PC-3 (cell line): ENCODE measurements at regions of chr14 and their contacts with region 1.

Region 1: GRCh38 chr14:34750670-34751069 is 36.3 kb upstream of the CFL2 start:
- DNase-seq: no peak
- ATAC-seq: no peak
- H3K4me3 ChIP-seq: no peak overlapping the region
- H3K27ac ChIP-seq: no peak overlapping the region
- H3K4me1 ChIP-seq: no peaks in the 10 kb centered on the region
- H3K27me3 ChIP-seq: no peaks in the 10 kb centered on the region
- CTCF ChIP-seq: no peak

Region 2: DNA sequence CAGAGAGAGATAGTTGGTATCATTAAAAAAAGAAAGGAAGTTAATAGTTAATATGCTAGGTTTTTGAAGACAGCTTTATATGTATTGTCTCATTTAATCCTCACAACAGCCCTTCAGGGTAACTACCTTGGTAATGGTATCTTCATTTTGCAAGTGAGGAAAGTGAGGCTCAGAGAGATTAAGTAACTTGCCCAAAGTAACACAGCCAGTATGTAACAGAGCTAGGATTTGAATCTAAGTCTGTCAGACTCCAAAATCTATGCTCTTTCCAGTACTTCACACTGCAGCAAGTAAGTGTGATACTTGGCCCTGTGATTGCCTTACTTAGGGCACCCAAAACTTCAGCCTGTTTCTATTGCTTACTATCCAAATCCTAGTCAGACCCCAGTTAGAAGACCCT is 239.1 kb after region 1 on chr14:
- CTCF ChIA-PET with region 1: no interaction called
- POLR2A ChIA-PET with region 1: no interaction called
- intact Hi-C with region 1: loop called (anchors 5 kb)
- DNase-seq: no peak
- ATAC-seq: no peak
- H3K4me3 ChIP-seq: no peak overlapping the region
- H3K27ac ChIP-seq: no peak overlapping the region
- H3K4me1 ChIP-seq: peaks cover 4% of the 10 kb centered on the region; the same call in 1 of the 2 replicates
- H3K27me3 ChIP-seq: no peaks in the 10 kb centered on the region
- CTCF ChIP-seq: no peak

Region 3: GRCh38 chr14:35512765-35513164 is 762.1 kb after region 1 on chr14:
- CTCF ChIA-PET with region 1: no interaction called
- POLR2A ChIA-PET with region 1: interaction called, 13 read pairs
- intact Hi-C with region 1: no loop called
- DNase-seq: no peak
- ATAC-seq: no peak
- H3K4me3 ChIP-seq: no peak overlapping the region
- H3K27ac ChIP-seq: no peak overlapping the region
- H3K4me1 ChIP-seq: no peaks in the 10 kb centered on the region
- H3K27me3 ChIP-seq: peaks cover 26% of the 10 kb centered on the region
- CTCF ChIP-seq: no peak